ENCODE measurements at regions of chr5 and their contacts with region 1.

Region 1: GRCh38 chr5:156402387-156402921 is 75.5 kb downstream of the SGCD start:
- DNase-seq: peak; percentile 59
- H3K4me3 Mint-ChIP-seq: peak overlapping the region; percentile 53
- H3K27ac Mint-ChIP-seq: peak overlapping the region; percentile 79
- H3K4me1 Mint-ChIP-seq: peaks cover 18% of the 10 kb centered on the region
- H3K27me3 Mint-ChIP-seq: peaks cover 7% of the 10 kb centered on the region

Region 2: DNA sequence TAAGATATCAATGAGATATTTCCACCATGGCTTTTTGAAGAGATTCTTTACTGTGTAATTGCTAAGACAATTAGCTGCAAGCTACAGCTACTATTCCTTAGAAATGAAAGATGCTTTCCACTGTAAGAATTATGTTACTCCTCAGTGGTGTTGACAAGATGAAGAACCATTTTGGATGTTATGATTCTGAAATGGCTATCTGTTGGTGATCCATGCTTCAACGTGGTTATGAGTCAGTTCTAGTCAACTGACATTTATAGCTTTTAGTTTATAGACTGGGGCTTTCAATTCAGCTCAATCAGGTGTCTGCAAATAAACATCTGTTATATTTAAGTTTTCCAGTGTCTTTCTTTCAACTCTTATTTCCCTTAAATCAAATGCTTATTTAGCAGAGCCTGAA is 18.2 kb after region 1 on chr5:
- intact Hi-C with region 1: loop called (anchors 2 kb)
- DNase-seq: no peak
- H3K4me3 Mint-ChIP-seq: no peak overlapping the region
- H3K27ac Mint-ChIP-seq: no peak overlapping the region
- H3K4me1 Mint-ChIP-seq: no peaks in the 10 kb centered on the region
- H3K27me3 Mint-ChIP-seq: peaks cover 17% of the 10 kb centered on the region

Region 3: DNA sequence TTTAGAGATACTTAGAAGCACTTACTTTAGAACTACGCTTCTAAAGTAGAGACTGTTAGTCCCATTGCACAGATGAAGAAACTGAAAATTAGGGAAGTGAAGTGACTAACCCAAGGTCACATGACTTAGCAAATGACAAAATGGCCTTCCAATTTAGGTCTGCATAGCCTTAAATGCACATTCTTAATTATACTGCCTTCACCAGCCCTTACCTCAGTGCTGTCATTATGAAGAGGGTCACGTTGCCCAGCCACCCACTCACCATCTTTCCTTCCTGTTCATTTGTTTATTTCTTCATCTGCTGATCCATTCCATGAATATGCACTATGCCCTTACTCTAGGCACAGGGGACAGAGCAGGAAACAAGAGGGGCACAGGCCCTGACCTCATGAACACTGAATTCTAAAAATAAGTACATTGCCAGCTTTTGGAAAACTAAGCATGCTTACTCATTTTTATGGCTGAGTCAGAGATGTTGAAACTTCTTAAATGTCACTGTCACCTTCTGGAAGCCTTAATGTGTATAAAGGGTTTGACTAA is 697.8 kb after region 1 on chr5:
- intact Hi-C with region 1: loop called (anchors 1 kb)
- DNase-seq: no peak
- H3K4me3 Mint-ChIP-seq: peak overlapping the region; percentile 54
- H3K27ac Mint-ChIP-seq: peak overlapping the region; percentile 95
- H3K4me1 Mint-ChIP-seq: peaks cover 50% of the 10 kb centered on the region
- H3K27me3 Mint-ChIP-seq: no peaks in the 10 kb centered on the region

Region 4: DNA sequence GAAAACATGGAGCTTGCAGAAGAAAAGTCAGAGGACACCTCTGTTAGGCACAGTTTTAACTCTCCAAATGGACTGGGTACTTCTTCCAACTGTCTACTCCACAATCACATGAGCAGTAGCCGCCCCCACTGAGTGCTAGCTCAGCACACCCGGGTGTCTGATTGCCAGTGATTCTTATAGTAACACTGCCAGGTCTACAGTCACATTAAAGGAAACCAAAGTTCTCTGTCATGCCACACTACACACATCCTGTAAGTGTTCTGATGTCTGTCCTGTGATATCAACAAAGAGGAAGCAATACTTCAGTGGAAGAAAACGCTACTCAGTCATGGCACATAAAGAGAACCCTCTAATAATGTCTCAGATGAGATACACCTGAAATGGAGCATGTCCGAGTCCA is 706.5 kb after region 1 on chr5 and contains the start of gene HAVCR2:
- intact Hi-C with region 1: loop called (anchors 2 kb)
- DNase-seq: peak; percentile 65
- H3K4me3 Mint-ChIP-seq: peak within 1 kb of the TSS; percentile 91
- H3K27ac Mint-ChIP-seq: peak within 1 kb of the TSS; percentile 94
- H3K4me1 Mint-ChIP-seq: peaks cover 63% of the 10 kb centered on the region
- H3K27me3 Mint-ChIP-seq: no peaks in the 10 kb centered on the region
- total RNA-seq, gene HAVCR2: 128 and 129 TPM in 2 replicates